Spleen (tissue), 13 donors: ENCODE measurements at regions of chr14 and their contacts with region 1.

Region 1: GRCh38 chr14:87745507-87746118 is 247.4 kb downstream of the GALC start:
- DNase-seq: no peak
- H3K4me3 ChIP-seq: no peak overlapping the region
- H3K27ac ChIP-seq: no peak overlapping the region
- H3K4me1 ChIP-seq: no peaks in the 10 kb centered on the region
- H3K27me3 ChIP-seq: peaks cover 0 to 7% (median 0%) of the 10 kb centered on the region in 7 donors
- CTCF ChIP-seq: peak in 8 of 11 experiments; percentile 16 to 68 (median 52)
- POLR2A ChIP-seq: no peak

Region 2: GRCh38 chr14:87896393-87897380 is 151.1 kb after region 1 on chr14:
- intact Hi-C with region 1: loop called (anchors 5 kb)
- DNase-seq: no peak
- H3K4me3 ChIP-seq: no peak overlapping the region
- H3K27ac ChIP-seq: no peak overlapping the region
- H3K4me1 ChIP-seq: no peaks in the 10 kb centered on the region
- H3K27me3 ChIP-seq: peaks cover 0 to 29% (median 3%) of the 10 kb centered on the region in 7 donors
- CTCF ChIP-seq: peak; percentile 11 to 76 (median 53)
- POLR2A ChIP-seq: no peak

Region 3: DNA sequence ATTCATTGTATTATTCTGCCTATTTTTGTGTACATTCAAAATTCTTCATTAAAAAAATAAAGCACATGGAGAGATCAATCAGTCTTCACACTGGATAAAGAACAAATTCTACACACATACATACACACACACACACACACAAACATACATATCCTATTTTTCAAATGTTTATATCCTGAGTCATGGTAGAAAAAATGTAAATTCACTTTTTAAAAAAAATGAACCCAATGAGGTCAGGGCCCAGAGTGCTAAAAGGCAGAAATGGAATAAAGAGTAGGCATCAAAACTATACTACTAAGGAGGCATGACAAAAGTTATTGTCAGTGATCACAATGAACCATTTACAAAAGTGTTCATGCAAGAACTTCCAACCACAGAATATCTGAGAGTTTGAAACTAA is 230.0 kb after region 1 on chr14:
- intact Hi-C with region 1: no loop called
- DNase-seq: no peak
- H3K4me3 ChIP-seq: no peak overlapping the region
- H3K27ac ChIP-seq: no peak overlapping the region
- H3K4me1 ChIP-seq: no peaks in the 10 kb centered on the region
- H3K27me3 ChIP-seq: no peaks in the 10 kb centered on the region
- CTCF ChIP-seq: no peak
- POLR2A ChIP-seq: no peak